Aorta (tissue), 5 donors: ENCODE measurements at regions of chr1 and their contacts with region 1.

Region 1: GRCh38 chr1:185774394-185774793 is 40.2 kb downstream of the HMCN1 start:
- DNase-seq: no peak
- ATAC-seq: no peak
- H3K4me3 ChIP-seq: no peak overlapping the region
- H3K27ac ChIP-seq: no peak overlapping the region
- H3K4me1 ChIP-seq: peaks cover 0 to 11% of the 10 kb centered on the region in 2 donors
- H3K27me3 ChIP-seq: no peaks in the 10 kb centered on the region

Region 2: GRCh38 chr1:185733818-185734771 is 40.3 kb before region 1 on chr1 and contains the start of gene HMCN1:
- intact Hi-C with region 1: loop called in 1 of 2 experiments (anchors 5 kb)
- DNase-seq: peak; percentile 89 to 93
- ATAC-seq: peak; percentile 93
- H3K4me3 ChIP-seq: peak within 1 kb of the TSS; percentile 94 to 99
- H3K27ac ChIP-seq: peak within 1 kb of the TSS; percentile 90 to 93
- H3K4me1 ChIP-seq: peaks cover 3 to 12% of the 10 kb centered on the region in 2 donors
- H3K27me3 ChIP-seq: no peaks in the 10 kb centered on the region
- total RNA-seq, gene HMCN1: 24.2 to 93.6 TPM